ENCODE measurements at regions of chr20 and their contacts with region 1.

Region 1: DNA sequence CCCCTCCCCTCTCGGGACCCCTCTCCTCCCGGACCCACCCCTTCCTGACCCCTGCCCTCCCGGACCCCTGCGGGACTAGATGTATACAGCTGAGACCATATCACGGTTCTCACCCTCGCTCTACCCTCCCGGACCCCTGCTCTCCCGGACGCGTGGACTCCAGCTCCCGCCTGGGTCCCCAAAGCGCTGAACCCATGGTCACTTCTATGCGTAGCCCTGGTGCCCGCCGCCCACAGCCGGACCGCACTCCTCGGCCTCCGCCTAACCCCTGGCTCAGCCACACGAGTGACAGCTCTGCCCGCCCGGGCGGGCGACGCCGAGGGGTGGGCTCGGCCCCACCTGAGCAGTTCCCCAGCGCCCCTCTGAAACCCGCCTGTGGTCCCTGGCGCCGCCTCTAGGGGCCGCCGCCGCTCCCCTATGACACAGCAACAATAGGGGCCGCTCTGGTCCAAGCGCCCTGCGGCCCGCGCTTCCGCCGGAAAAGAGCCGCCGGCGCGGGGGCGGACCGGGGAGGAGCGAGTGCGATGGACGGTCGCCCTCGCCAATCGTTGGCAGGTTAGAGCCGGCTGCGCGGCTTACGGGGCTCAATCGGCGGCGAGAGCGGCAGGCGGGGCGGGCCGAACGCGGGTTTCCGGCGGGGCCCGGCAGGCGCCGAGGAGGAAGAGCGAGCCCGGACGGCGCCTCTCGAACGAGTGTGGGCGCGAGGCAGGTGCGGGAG is at the start of gene ADRM1:
- DNase-seq: peak; percentile 98
- H3K4me3 ChIP-seq: peak within 1 kb of the TSS; percentile 77 to 99 (median 86)
- H3K27ac ChIP-seq: peak within 1 kb of the TSS; percentile 95 to 99 (median 98)
- H3K4me1 ChIP-seq: peaks cover 27 to 54% (median 39%) of the 10 kb centered on the region in 4 donors
- H3K27me3 ChIP-seq: no peaks in the 10 kb centered on the region
- CTCF ChIP-seq: peak in 2 of 3 experiments; percentile 98 to 99
- EP300 ChIP-seq: no peak
- POLR2A ChIP-seq: peak; percentile 39
- total RNA-seq, gene ADRM1: 127 to 184 (median 173) TPM

Region 2: DNA sequence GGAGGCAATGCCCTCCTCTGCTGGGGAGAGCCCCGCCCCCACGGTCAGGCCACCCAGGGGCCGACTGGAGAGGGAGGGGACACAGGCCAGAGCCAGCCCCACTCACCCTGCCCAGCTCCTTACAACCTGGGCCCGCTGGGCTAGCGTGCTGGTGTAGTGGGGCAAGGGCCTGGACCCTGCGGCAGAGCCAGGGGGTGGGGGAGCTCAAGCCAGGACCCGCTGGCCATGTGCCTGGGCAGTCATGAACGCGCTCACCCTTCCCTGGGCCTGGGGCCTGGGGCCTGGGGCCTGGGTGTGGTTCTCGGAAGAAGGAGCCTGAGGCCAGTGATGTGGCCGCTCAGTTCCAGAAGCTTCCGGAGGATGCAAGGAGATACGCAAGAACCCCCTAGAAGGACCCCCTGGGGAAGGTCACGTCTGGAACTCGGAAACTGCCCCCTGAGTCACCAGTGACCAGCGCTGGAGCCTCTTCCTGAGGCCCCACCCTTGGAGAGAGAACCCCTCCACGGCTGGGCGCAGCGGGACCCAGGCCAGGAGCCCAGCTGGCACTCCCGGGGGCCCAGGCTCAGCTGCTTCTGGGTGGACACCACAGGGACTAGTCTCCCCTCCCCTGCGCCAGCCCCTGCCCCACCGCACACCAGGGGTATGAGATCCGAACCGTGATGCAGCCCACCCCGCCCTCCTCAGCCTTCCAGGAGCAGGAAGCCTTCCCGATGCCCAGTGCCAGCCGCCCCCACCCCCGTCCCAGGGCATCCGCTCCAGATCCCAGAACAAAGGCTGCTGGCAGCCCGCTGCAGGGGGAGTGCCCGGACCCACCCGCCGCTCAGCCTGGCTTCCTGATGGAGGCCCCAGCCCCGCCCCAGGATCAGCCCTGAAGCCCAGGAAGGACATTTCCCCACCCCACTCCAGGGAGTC is 57.0 kb after region 1 on chr20:
- intact Hi-C with region 1: no loop called
- DNase-seq: no peak
- H3K4me3 ChIP-seq: peak overlapping the region in 3 of 4 donors; percentile 29 to 41 (median 40)
- H3K27ac ChIP-seq: peak overlapping the region; percentile 93 to 97 (median 93)
- H3K4me1 ChIP-seq: peaks cover 94 to 98% (median 97%) of the 10 kb centered on the region in 4 donors
- H3K27me3 ChIP-seq: no peaks in the 10 kb centered on the region
- CTCF ChIP-seq: no peak
- EP300 ChIP-seq: peak; percentile 27
- POLR2A ChIP-seq: no peak

Region 3: DNA sequence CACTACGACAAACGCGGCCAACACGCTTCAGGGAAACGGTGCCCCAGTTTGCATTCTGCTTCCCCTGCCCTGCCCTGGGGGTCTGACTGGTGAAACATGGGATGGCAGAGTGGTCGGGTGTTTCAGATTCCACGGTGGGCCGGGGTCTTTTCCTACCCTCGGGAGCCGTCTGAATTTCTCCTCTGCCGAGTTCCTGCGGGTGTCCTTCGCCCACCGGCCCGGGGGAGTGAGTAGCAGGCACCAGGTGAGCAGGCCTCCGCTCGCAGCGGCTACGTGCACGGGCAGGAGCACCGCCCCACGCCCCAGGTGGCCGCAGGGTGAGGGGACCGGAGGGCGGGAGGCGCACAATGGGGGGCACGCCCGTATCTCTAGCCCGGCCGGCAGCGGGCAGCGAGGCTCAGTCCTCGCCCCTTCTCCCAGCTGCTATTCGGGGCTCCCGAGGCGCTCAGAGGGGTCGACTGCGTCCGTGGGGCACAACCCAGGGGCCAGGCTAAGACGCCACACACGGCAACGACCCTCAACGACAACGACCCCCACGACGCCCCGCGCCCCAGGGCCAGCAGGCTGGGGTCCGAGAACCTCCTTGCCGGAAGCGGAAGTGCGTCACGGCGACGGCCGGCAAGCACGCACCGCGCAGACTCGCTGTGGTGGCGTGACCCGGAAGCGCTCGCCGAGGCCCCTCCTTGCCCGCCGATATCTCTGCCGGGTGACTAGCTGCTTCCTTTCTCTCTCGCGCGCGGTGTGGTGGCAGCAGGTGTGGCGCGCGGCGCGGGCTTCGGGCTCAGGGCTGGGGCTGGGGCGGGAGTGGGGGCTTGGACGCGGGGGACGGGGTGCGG is 84.1 kb after region 1 on chr20 and contains the start of gene RPS21:
- intact Hi-C with region 1: loop called (anchors 2 kb)
- DNase-seq: peak; percentile 98
- H3K4me3 ChIP-seq: peak within 1 kb of the TSS; percentile 85 to 100 (median 91)
- H3K27ac ChIP-seq: peak within 1 kb of the TSS; percentile 90 to 97 (median 93)
- H3K4me1 ChIP-seq: peaks cover 30 to 43% (median 36%) of the 10 kb centered on the region in 4 donors
- H3K27me3 ChIP-seq: no peaks in the 10 kb centered on the region
- CTCF ChIP-seq: peak in 2 of 3 experiments; percentile 21 to 28
- EP300 ChIP-seq: no peak
- POLR2A ChIP-seq: peak; percentile 96
- total RNA-seq, gene RPS21: 581 to 2,787 (median 1,391) TPM

Measured in esophagus muscularis mucosa (tissue), 4 donors.